ENCODE measurements at regions of chr3 and their contacts with region 1.

Region 1: DNA sequence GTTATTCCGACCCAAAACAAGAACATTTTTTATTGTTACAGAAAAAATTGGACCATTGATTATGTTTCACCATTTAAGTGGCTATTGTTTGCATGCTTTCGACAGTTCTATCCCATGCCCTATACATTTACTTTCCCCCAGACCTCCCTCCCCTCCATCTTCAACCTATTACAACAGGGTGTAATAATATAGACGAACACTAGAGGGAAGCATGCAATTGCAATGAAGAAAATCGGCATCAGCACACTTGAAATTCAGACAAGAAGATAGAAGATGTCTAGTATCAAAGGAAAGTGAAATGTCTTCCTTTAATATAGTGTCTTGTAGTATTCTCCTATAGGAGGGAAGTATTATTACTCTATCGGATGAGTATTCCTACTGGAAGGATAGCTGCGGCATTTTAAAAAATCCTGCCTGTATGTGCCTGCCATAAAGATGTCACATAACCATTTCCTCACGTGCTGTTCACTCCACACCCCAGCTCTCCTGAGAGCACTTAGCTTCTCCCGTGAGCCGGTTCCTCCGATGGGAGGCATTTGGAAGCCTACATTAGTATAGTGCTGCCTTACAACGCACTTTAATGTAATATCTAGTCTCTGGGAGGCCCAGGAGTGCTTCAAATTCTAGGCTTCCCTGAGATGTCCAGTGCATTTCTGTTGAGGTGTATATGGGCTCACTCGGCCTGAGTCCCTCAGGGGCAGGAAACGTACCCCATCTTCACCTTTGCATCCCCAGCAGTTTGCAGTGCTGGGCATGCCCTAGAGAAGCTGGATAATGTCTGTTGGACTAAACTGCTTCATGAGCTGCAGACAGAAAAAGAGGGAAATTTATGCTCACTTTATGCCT is 17.8 kb upstream of the ERICH6 start:
- DNase-seq: no peak
- H3K4me3 Mint-ChIP-seq: no peak overlapping the region
- H3K27ac Mint-ChIP-seq: no peak overlapping the region
- H3K4me1 Mint-ChIP-seq: peaks cover 28% of the 10 kb centered on the region
- H3K27me3 Mint-ChIP-seq: no peaks in the 10 kb centered on the region

Region 2: GRCh38 chr3:150528354-150528797 is 193.1 kb before region 1 on chr3:
- CTCF ChIA-PET with region 1: no interaction called
- intact Hi-C with region 1: loop called (anchors 1 kb)
- DNase-seq: no peak
- H3K4me3 Mint-ChIP-seq: no peak overlapping the region
- H3K27ac Mint-ChIP-seq: no peak overlapping the region
- H3K4me1 Mint-ChIP-seq: peaks cover 8% of the 10 kb centered on the region
- H3K27me3 Mint-ChIP-seq: no peaks in the 10 kb centered on the region

Region 3: DNA sequence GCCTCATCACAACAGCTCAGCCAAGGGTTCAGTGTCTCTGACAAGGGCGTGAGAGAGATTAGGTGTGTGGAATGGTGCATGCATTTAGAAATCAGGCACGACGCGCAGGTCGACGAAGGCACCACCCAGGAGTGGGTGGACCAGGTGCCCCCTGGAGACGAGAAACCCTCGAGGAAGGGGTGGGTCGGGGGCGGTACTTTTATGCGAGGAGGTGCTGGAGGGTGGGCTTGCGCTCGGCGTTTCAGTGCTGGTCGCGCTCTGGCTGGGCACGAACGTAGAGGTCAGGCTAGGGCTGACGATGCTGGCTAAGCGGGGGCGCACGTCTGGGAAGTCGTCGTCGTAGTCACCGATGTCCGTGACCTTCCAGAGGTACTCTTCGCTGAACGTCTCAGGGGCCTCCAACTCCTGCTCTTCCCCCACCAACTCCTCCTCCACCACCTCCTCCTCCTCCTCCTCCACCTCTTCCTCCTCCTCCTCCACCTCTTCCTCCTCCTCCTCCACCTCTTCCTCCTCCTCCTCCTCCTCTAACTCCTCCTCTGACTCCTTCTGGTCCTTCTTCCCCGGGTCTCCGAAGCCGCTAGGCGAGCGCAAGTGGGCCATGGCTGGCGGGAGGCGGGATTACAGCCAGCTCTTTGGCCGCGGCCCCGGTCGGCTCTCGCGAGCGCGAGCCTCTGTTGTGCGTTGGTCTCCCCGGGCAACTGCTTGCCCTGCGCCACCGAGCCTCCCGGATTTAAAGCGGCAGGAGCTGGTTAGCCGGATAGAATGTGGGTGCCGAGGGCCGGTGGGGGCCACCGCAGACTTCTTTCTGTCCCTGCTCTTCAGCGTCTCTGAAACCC is 18.0 kb before region 1 on chr3 and contains the start of gene ERICH6:
- CTCF ChIA-PET with region 1: interaction called, 5 read pairs
- intact Hi-C with region 1: loop called (anchors 1 kb)
- DNase-seq: peak; percentile 88
- H3K4me3 Mint-ChIP-seq: peak within 1 kb of the TSS; percentile 96
- H3K27ac Mint-ChIP-seq: no peak within 1 kb of the TSS
- H3K4me1 Mint-ChIP-seq: peaks cover 25% of the 10 kb centered on the region
- H3K27me3 Mint-ChIP-seq: no peaks in the 10 kb centered on the region
- total RNA-seq, gene ERICH6: not detected

Region 4: GRCh38 chr3:150830094-150830681 is 108.7 kb after region 1 on chr3:
- CTCF ChIA-PET with region 1: interaction called, 5 read pairs
- intact Hi-C with region 1: loop called (anchors 1 kb)
- DNase-seq: peak; percentile 14
- H3K4me3 Mint-ChIP-seq: no peak overlapping the region
- H3K27ac Mint-ChIP-seq: no peak overlapping the region
- H3K4me1 Mint-ChIP-seq: no peaks in the 10 kb centered on the region
- H3K27me3 Mint-ChIP-seq: peaks cover 4% of the 10 kb centered on the region

Region 5: GRCh38 chr3:151067158-151067557 is 345.6 kb after region 1 on chr3:
- CTCF ChIA-PET with region 1: no interaction called
- intact Hi-C with region 1: no loop called
- DNase-seq: peak; percentile 10
- H3K4me3 Mint-ChIP-seq: no peak overlapping the region
- H3K27ac Mint-ChIP-seq: no peak overlapping the region
- H3K4me1 Mint-ChIP-seq: no peaks in the 10 kb centered on the region
- H3K27me3 Mint-ChIP-seq: peaks cover 9% of the 10 kb centered on the region

Region 6: GRCh38 chr3:151146071-151146730 is 424.7 kb after region 1 on chr3:
- CTCF ChIA-PET with region 1: interaction called, 10 read pairs
- intact Hi-C with region 1: loop called (anchors 1 kb)
- DNase-seq: peak; percentile 77
- H3K4me3 Mint-ChIP-seq: no peak overlapping the region
- H3K27ac Mint-ChIP-seq: no peak overlapping the region
- H3K4me1 Mint-ChIP-seq: no peaks in the 10 kb centered on the region
- H3K27me3 Mint-ChIP-seq: no peaks in the 10 kb centered on the region

Measured in activated naive CD4-positive, alpha-beta T cell treated with anti-CD3 and anti-CD28 coated beads for 36 hours (primary cell).